CD4-positive, alpha-beta memory T cell (primary cell): ENCODE measurements at regions of chr2 and their contacts with region 1.

Region 1: DNA sequence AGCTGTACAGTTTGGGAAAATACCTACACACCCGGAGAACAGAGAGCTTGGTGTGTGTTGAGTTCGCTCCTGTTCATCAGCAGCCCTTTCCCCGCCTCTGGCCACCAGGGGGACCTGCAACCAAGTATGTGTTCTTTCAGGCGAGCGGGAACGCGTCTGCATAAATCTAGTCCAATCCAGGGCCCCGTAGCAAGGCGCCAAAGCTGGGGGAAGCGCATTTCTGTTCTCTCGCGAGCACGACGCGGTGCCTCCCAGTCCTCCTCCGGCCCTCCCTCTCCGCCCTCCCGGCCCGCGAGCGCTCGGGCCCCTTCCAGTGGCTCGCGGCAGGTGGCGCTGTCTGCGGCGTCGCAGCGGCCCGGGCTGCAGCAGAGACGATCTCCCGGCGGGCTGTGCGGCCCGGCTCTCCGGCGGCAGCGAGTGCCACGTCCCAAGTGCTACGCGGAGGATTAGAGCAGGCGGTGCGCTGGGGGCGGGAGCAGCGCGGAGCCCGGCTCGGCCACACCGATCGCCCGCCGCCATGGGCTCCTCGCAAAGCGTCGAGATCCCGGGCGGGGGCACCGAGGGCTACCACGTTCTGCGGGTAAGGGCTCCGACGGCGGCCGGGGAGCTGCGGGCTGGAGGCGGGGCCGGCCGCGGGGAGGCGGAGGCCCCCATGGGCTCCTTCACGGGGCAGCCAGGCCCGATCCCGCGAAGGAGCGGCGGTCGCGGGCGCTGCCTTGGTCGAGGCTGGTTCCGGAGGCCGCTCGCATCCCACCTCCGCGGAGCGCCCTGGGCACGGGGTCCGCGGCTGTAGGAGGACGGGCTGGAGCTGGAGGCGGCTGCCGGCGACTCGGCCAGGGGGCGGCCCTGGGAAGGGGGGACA is at the start of gene GORASP2:
- DNase-seq: peak; percentile 98 to 99 (median 99)
- H3K4me3 ChIP-seq: peak within 1 kb of the TSS; percentile 70 to 82
- H3K4me3 Mint-ChIP-seq: peak within 1 kb of the TSS; percentile 93 to 99 (median 96)
- H3K27ac ChIP-seq: peak within 1 kb of the TSS; percentile 89
- H3K27ac Mint-ChIP-seq: peak within 1 kb of the TSS; percentile 94 to 98 (median 97)
- H3K4me1 ChIP-seq: peaks cover 43% of the 10 kb centered on the region
- H3K4me1 Mint-ChIP-seq: peaks cover 24 to 48% (median 38%) of the 10 kb centered on the region in 4 donors
- H3K27me3 ChIP-seq: no peaks in the 10 kb centered on the region
- H3K27me3 Mint-ChIP-seq: no peaks in the 10 kb centered on the region
- total RNA-seq, gene GORASP2: 82.4 to 83.2 TPM

Region 2: DNA sequence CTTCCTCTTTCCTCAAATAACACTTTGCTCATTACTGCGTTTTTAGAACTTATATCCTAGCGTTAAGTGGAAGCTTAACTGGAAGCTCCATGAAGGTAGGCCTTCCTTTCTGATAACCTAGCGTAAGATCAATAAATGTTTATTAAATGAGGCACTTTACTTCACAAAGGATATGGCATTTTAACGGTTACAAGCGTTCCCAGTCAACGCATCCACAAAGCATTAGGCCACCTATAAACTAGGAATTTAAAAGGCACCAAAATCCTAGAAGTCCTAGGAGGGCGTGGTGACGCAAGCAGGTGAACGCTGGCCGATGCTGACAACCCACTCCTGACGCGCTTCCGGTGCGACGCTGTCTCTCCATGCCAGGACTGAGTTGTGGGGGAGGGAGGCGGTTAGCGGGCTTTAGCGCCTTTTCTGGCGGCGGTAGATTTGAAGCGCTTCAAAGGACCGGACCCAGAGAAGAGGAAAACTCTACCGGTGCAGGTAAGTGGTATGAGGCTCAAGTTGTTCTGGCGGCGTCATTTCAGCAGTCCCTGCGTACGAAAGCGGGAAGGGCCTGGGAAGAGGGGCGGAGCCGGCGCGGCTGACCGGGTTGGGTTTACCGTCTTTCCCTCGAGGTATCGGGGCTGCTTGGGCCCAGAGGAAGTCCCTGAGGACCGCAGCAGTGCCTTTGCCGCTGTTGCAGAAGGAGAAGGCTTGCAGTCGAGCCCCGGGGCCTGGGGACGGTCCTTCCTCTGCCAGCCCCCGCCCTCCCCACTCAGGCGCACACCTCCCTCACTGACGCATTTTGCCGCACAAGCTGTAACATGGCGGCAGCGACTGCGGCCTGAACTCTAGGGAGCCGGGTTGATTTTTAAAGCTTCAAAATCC is 1344.8 kb before region 1 on chr2 and contains the start of gene PPIG:
- CTCF ChIA-PET with region 1: no interaction called
- POLR2A ChIA-PET with region 1: no interaction called
- intact Hi-C with region 1: loop called (anchors 5 kb)
- DNase-seq: peak; percentile 86 to 93 (median 89)
- H3K4me3 ChIP-seq: peak within 1 kb of the TSS; percentile 76 to 92
- H3K4me3 Mint-ChIP-seq: peak within 1 kb of the TSS; percentile 96 to 100 (median 98)
- H3K27ac ChIP-seq: peak within 1 kb of the TSS; percentile 94
- H3K27ac Mint-ChIP-seq: peak within 1 kb of the TSS; percentile 98 to 100 (median 100)
- H3K4me1 ChIP-seq: peaks cover 35% of the 10 kb centered on the region
- H3K4me1 Mint-ChIP-seq: peaks cover 20 to 49% (median 34%) of the 10 kb centered on the region in 4 donors
- H3K27me3 ChIP-seq: no peaks in the 10 kb centered on the region
- H3K27me3 Mint-ChIP-seq: no peaks in the 10 kb centered on the region
- total RNA-seq, gene PPIG: 79.2 to 82.9 TPM

Region 3: DNA sequence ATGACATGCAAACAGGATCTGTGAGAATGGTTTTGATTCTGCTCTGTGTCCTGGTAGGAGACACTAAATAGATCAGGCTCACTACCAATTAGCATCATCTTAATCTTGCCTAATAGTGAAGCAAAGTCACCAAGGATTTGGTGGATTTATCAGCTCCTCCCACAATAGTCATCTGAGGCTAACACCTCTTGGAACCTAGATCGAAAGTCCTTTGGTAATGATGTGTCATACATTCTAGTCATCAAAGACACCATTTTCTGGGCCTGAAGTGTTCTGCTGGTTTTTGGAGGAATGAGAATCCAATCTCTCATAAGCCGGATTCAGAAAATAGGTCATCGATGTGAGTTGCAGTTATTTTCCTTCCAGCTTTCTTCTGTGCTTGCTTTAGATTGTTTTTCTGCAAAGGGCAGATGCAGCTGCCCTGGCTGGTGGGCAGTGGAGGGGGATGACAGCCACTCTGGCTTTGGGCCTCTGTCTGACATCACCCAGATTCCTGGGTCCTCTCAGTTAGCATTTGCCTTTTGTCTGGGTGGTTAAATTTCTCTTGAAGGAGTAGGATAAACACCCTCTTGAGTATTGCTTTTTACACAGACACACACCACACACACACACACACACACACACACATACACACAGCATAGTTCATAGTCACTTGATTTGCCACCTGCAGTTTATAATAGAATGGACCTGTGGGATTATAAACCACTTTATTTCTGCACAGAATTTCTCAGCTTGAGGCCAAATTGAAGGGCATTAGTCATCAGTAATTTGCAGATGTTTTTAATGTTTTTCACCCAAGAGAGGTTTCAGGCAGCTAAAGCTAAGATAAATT is 750.9 kb before region 1 on chr2 and contains the start of gene MYO3B:
- CTCF ChIA-PET with region 1: no interaction called
- POLR2A ChIA-PET with region 1: no interaction called
- intact Hi-C with region 1: no loop called
- DNase-seq: no peak
- H3K4me3 ChIP-seq: no peak within 1 kb of the TSS
- H3K4me3 Mint-ChIP-seq: no peak within 1 kb of the TSS
- H3K27ac ChIP-seq: no peak within 1 kb of the TSS
- H3K27ac Mint-ChIP-seq: no peak within 1 kb of the TSS
- H3K4me1 ChIP-seq: no peaks in the 10 kb centered on the region
- H3K4me1 Mint-ChIP-seq: no peaks in the 10 kb centered on the region
- H3K27me3 ChIP-seq: no peaks in the 10 kb centered on the region
- H3K27me3 Mint-ChIP-seq: peaks cover 0 to 3% of the 10 kb centered on the region in 2 donors
- total RNA-seq, gene MYO3B: not detected

Region 4: DNA sequence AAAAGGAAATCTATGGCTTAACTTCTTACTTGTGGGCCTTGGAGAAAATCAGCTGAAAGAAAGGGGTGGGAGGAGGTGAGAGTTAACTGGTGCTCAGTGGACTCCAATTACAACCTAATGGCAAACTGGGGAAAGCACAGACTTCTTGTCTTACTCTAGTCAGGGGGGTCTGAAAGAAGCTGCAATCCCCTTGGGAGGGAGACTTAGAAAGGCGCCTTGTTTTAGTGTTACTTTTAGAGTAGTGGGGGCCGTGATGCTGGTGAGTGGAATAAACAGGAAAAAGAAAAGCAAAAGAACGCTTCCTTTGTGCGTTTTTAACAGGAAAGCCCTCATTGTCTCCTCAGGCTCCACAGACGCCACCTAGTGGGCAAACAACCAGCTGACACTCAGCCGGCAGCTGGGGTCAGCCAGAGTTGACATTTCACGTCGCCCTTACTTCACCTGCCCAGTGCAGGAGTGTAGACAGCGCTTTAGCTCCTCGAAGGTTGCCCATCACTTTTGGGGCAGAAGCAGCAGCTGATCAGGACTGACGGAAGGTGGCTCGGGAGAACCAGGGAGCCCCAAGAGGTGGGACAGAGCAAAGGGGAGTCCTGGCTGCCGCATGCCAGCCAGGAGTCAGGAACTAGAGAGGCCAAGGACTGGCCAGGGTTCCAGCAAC is 55.9 kb before region 1 on chr2:
- CTCF ChIA-PET with region 1: interaction called, 12 read pairs
- POLR2A ChIA-PET with region 1: interaction called, 9 read pairs
- intact Hi-C with region 1: no loop called
- DNase-seq: peak; percentile 56 to 70 (median 65)
- H3K4me3 ChIP-seq: no peak overlapping the region
- H3K4me3 Mint-ChIP-seq: peak overlapping the region; percentile 59 to 88 (median 80)
- H3K27ac ChIP-seq: no peak overlapping the region
- H3K27ac Mint-ChIP-seq: peak overlapping the region in 4 of 7 donors; percentile 19 to 84 (median 68)
- H3K4me1 ChIP-seq: peaks cover 12% of the 10 kb centered on the region
- H3K4me1 Mint-ChIP-seq: peaks cover 7 to 14% (median 11%) of the 10 kb centered on the region in 4 donors
- H3K27me3 ChIP-seq: no peaks in the 10 kb centered on the region
- H3K27me3 Mint-ChIP-seq: peaks cover 4 to 9% of the 10 kb centered on the region in 2 donors

Region 5: GRCh38 chr2:170949415-170949814 is 20.4 kb after region 1 on chr2:
- CTCF ChIA-PET with region 1: interaction called, 24 read pairs
- POLR2A ChIA-PET with region 1: interaction called, 8 read pairs
- intact Hi-C with region 1: no loop called
- DNase-seq: no peak
- H3K4me3 ChIP-seq: no peak overlapping the region
- H3K4me3 Mint-ChIP-seq: no peak overlapping the region
- H3K27ac ChIP-seq: no peak overlapping the region
- H3K27ac Mint-ChIP-seq: peak overlapping the region in 1 of 7 donors; percentile 37
- H3K4me1 ChIP-seq: peaks cover 15% of the 10 kb centered on the region
- H3K4me1 Mint-ChIP-seq: peaks cover 9 to 25% (median 17%) of the 10 kb centered on the region in 4 donors
- H3K27me3 ChIP-seq: no peaks in the 10 kb centered on the region
- H3K27me3 Mint-ChIP-seq: no peaks in the 10 kb centered on the region

Region 6: DNA sequence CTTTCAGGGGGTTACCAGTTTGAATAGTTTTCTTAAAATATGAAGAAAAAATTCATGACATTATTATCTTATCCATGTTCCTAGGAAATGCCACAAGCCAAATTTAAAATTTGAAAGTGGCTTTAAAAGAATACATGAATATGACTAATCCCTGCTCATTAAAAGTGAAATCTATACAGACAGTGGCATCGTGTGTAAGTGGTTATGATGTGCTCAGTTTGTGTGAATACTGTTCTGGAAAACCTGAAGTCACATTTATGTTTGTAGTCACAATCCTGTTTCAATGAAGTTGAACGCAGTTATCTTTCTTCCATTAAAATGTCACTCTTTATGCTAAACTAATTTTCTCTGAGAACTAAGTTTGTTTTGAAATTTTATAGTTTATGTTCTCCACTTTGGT is 75.8 kb after region 1 on chr2:
- CTCF ChIA-PET with region 1: no interaction called
- POLR2A ChIA-PET with region 1: no interaction called
- intact Hi-C with region 1: no loop called
- DNase-seq: no peak
- H3K4me3 ChIP-seq: no peak overlapping the region
- H3K4me3 Mint-ChIP-seq: no peak overlapping the region
- H3K27ac ChIP-seq: no peak overlapping the region
- H3K27ac Mint-ChIP-seq: no peak overlapping the region
- H3K4me1 ChIP-seq: no peaks in the 10 kb centered on the region
- H3K4me1 Mint-ChIP-seq: peaks cover 0 to 6% (median 1%) of the 10 kb centered on the region in 4 donors
- H3K27me3 ChIP-seq: no peaks in the 10 kb centered on the region
- H3K27me3 Mint-ChIP-seq: no peaks in the 10 kb centered on the region

Region 7: DNA sequence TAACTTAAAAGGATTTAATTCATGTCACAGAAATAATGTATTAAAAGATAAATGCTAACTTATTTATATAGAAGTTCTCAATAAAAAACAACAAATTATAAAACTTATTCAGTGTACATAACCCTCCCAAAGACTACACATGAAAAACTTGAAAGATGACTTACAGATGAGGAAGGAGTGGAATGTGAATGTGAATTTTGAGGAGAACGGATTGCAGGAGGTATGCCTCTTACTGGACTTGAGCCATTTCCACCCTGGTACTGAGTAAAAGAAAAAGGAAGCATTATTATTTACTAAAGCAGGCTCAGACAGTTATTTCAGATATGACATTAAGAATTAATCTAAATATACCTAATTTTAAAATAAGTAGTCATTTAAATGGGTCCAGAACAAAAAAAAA is 127.3 kb after region 1 on chr2:
- CTCF ChIA-PET with region 1: no interaction called
- POLR2A ChIA-PET with region 1: no interaction called
- intact Hi-C with region 1: no loop called
- DNase-seq: no peak
- H3K4me3 ChIP-seq: no peak overlapping the region
- H3K4me3 Mint-ChIP-seq: no peak overlapping the region
- H3K27ac ChIP-seq: no peak overlapping the region
- H3K27ac Mint-ChIP-seq: peak overlapping the region in 1 of 7 donors; percentile 8
- H3K4me1 ChIP-seq: no peaks in the 10 kb centered on the region
- H3K4me1 Mint-ChIP-seq: peaks cover 2 to 11% (median 6%) of the 10 kb centered on the region in 4 donors
- H3K27me3 ChIP-seq: no peaks in the 10 kb centered on the region
- H3K27me3 Mint-ChIP-seq: no peaks in the 10 kb centered on the region

Region 8: DNA sequence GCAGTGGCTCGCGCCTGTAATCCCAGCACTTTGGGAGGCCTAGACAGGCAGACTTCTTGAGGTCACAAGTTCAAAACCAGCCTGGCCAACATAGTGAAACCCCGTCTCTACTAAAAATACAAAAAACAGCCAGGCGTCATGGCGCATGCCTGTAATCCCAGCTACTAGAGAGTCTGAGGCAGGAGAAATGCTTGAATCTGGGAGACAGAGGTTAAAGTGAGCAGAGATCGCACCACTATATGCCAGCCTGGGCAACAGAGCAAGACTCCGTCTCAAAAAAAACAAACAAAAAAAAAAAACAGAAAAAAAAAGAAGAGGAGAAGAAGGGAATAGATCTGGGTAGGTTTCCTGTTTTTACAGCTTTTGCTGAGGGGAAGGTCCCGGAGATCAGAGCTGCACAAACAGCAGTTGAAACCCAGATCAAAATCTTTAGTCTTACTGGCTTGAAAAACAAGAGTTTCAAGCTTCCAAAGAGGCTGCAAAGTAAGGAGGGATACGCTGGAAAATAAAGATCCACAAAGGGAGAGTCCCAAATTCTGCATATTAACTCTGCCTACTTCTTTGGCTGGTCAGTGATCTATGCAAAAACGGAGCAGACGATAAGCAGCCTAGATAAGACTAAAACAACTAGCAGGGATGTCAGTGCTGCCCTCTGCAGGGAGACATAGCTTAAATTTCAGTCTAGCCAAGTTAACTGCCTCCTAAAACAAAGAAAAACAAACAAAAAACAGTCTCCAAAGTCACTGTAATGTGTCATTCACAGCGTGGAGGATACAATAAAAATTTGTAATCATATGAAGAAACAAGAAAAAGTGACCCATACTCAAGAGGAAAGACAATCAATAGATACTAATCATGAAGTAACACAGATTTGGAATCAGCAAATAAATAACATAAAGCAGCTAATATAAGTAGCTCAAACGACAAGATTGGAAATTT is 157.6 kb after region 1 on chr2:
- CTCF ChIA-PET with region 1: interaction called, 20 read pairs
- POLR2A ChIA-PET with region 1: interaction called, 6 read pairs
- intact Hi-C with region 1: loop called (anchors 1 kb)
- DNase-seq: peak; percentile 47 to 71 (median 56)
- H3K4me3 ChIP-seq: peak overlapping the region in 1 of 2 donors; percentile 19
- H3K4me3 Mint-ChIP-seq: peak overlapping the region; percentile 74 to 90 (median 84)
- H3K27ac ChIP-seq: peak overlapping the region; percentile 30
- H3K27ac Mint-ChIP-seq: peak overlapping the region; percentile 80 to 95 (median 90)
- H3K4me1 ChIP-seq: peaks cover 72% of the 10 kb centered on the region
- H3K4me1 Mint-ChIP-seq: peaks cover 48 to 78% (median 65%) of the 10 kb centered on the region in 4 donors
- H3K27me3 ChIP-seq: no peaks in the 10 kb centered on the region
- H3K27me3 Mint-ChIP-seq: no peaks in the 10 kb centered on the region

Region 9: DNA sequence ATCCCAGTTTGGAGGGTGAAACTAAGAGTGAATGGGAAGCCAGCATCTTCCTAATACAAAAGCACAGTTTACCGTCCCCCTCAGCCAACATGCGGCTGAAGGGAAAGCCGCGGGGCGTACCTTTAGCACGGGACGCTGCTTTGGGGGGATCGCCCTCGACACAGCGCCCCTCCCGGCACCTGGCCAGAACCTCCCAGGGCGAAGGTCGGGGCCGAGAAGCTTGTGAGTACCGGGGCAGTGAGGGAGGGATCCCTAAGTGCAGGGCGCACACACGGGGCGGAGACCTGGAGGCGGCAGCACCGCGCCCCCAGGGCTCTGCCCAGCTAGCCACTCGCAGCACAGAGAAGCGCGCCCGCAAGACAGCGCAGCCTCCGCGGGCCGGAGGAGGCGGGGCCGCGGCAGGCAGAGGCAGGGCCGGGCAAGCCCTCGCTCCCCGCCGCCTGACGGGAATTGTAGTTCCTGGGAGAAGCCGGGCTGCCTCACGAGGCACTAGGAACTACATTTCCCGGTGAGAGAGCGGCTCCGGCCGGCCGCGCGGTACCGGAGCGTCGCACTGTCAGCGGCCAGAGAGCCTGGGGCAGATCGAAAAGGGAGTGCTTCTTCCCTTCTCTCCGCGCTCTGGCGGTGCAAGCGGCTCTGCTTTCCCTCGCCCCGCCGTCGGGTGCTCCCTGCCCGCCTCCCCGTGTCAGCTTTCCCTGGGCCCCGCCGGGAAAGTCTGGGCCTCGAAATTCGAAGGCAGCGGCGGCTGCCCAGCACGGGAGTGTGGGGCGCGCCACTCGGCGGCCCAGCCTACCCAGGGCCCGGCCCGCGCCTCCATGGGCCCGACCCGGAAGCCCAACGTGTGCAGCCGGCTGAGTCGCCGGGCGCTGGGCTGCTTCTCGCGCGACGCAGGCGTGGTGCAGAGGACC is 505.0 kb after region 1 on chr2 and contains the starts of genes DCAF17 and METTL8:
- CTCF ChIA-PET with region 1: interaction called, 18 read pairs
- POLR2A ChIA-PET with region 1: interaction called, 38 read pairs
- intact Hi-C with region 1: loop called (anchors 1 kb)
- DNase-seq: peak; percentile 92 to 95 (median 94)
- H3K4me3 ChIP-seq: peak within 1 kb of the TSS; percentile 40 to 82
- H3K4me3 Mint-ChIP-seq: peak within 1 kb of the TSS; percentile 84 to 92 (median 90)
- H3K27ac ChIP-seq: peak within 1 kb of the TSS; percentile 91
- H3K27ac Mint-ChIP-seq: peak within 1 kb of the TSS; percentile 79 to 98 (median 96)
- H3K4me1 ChIP-seq: peaks cover 30% of the 10 kb centered on the region
- H3K4me1 Mint-ChIP-seq: peaks cover 32 to 52% (median 40%) of the 10 kb centered on the region in 4 donors
- H3K27me3 ChIP-seq: no peaks in the 10 kb centered on the region
- H3K27me3 Mint-ChIP-seq: no peaks in the 10 kb centered on the region
- total RNA-seq, gene DCAF17: 26.6 to 30.3 TPM
- total RNA-seq, gene METTL8: 17.5 to 19.2 TPM

Region 10: GRCh38 chr2:172095146-172095904 is 1166.3 kb after region 1 on chr2:
- CTCF ChIA-PET with region 1: no interaction called
- POLR2A ChIA-PET with region 1: no interaction called
- intact Hi-C with region 1: loop called (anchors 5 kb)
- DNase-seq: peak; percentile 80 to 88 (median 83)
- H3K4me3 ChIP-seq: peak overlapping the region in 1 of 2 donors; percentile 50
- H3K4me3 Mint-ChIP-seq: peak overlapping the region; percentile 82 to 90 (median 87)
- H3K27ac ChIP-seq: no peak overlapping the region
- H3K27ac Mint-ChIP-seq: peak overlapping the region; percentile 29 to 93 (median 88)
- H3K4me1 ChIP-seq: peaks cover 71% of the 10 kb centered on the region
- H3K4me1 Mint-ChIP-seq: peaks cover 21 to 62% (median 32%) of the 10 kb centered on the region in 4 donors
- H3K27me3 ChIP-seq: peaks cover 97% of the 10 kb centered on the region
- H3K27me3 Mint-ChIP-seq: peaks cover 55 to 57% of the 10 kb centered on the region in 2 donors

Region 11: DNA sequence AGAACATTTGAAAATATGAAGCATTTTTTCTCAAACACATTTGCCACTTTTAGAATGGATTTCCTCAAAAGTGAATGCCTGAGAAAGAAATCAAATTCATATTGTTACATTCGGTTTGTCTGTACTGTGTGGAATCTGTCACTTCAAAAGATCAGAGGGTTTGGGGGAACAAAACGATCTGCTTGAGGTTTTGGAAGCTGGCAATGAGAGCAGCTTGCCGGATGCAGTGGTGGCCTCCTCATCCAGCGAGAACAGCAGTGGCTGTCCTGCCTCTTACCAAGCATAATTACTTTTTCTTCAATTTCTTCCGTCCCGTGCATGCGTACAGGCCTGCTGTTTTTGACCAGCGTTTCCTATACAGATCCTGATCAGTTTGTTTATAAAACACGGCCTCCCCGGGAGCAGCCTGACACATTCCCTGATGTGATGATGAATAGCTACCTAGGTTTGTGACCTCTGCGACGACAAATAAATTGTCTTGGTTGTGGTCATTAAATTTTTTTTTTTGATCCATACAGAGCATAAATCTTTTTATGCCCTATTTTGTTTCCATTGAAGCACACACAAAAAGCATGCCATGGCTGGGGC is 1543.5 kb after region 1 on chr2:
- CTCF ChIA-PET with region 1: no interaction called
- POLR2A ChIA-PET with region 1: no interaction called
- intact Hi-C with region 1: no loop called
- DNase-seq: peak in 1 of 5 donors; percentile 25
- H3K4me3 ChIP-seq: no peak overlapping the region
- H3K4me3 Mint-ChIP-seq: peak overlapping the region in 7 of 8 donors; percentile 2 to 64 (median 27)
- H3K27ac ChIP-seq: no peak overlapping the region
- H3K27ac Mint-ChIP-seq: peak overlapping the region in 5 of 7 donors; percentile 42 to 70 (median 58)
- H3K4me1 ChIP-seq: peaks cover 8% of the 10 kb centered on the region
- H3K4me1 Mint-ChIP-seq: peaks cover 10 to 25% (median 16%) of the 10 kb centered on the region in 4 donors
- H3K27me3 ChIP-seq: no peaks in the 10 kb centered on the region
- H3K27me3 Mint-ChIP-seq: no peaks in the 10 kb centered on the region